Activated naive CD4-positive, alpha-beta T cell treated with anti-CD3 and anti-CD28 coated beads for 36 hours (primary cell): ENCODE measurements at regions of chr20 and their contacts with region 1.

Region 1: DNA sequence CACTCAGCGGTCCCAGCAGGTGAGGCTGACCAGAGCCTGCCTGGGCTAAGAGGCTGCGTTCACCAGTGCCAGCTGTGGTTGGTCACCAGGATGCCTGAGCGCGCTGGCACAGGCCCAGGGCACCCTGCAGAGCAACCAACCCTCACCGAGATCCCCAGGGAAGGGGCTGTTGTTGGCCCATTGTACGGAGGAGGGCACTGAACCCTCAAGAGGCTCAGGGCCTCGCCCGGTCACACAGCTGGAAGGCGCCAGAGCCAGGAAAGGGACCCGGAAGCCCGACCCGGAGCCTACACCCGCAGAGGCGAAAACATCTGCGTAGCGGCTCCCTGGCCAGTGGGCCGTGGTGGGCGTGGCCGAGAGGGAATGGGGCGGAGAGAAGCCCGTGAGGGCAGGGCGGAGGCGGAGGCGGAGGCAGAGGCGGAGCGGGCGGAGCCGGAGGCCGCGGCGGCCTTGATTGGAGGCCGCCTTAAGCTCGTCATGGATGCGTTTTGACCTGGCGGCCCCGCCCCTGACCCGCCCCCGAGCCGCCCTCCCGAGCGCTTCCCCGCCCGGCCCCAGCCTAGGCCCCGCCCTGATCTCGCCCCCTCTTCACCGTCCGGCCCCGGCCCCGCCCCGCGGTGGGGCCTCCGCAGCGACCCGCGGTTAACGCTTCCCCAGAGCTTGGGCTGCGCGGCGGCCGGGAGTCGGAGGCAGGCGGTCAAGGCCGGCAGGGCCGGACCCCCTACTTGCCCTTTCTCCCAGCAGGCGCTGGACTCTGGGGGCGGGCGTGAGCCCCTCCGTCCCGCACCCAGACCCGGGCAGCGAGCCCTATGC is 2.2 kb upstream of the MRGBP start:
- DNase-seq: peak; percentile 97
- H3K4me3 Mint-ChIP-seq: peak overlapping the region; percentile 81
- H3K27ac Mint-ChIP-seq: peak overlapping the region; percentile 84
- H3K4me1 Mint-ChIP-seq: peaks cover 25% of the 10 kb centered on the region
- H3K27me3 Mint-ChIP-seq: no peaks in the 10 kb centered on the region

Region 2: DNA sequence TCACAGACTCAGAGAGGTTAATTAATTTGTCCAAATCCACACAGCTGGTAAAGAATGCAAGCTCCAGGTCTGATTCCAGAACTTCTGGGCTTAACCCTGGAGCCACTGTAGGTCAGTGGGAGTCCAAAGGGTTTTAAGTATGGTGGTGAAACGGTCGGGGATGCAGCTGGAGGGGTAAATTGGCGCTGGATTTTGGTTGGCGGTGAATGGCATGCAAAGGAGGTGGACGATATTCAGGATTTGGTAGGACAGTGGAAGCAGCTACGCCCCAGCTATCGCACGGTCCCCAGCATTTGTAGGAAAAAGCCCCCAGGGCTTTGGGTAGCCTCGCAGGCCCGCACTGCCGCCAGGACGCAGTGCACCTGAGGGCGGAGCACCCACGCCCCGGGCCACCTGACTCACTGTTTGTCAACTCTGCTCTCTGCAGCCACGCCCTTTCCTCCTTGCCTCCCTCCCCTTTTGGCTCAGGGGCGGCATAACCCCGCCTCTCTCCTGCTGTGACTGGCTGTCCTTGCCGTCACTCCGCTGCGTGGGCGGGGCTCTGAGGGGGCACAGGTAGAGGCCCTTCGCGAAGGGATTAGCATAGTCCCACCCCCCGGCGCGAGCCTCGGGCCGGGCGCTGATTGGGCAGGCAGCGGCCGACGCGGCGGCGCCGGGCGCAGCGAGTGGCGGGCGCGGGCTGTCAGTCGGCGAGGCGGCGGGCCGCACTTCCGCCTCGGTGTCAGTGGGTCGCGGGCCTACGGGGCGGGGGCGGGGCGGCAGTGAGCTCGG is 556.1 kb before region 1 on chr20 and contains the start of gene OSBPL2:
- CTCF ChIA-PET with region 1: no interaction called
- intact Hi-C with region 1: loop called (anchors 1 kb)
- DNase-seq: peak; percentile 100
- H3K4me3 Mint-ChIP-seq: peak within 1 kb of the TSS; percentile 78
- H3K27ac Mint-ChIP-seq: peak within 1 kb of the TSS; percentile 79
- H3K4me1 Mint-ChIP-seq: peaks cover 28% of the 10 kb centered on the region
- H3K27me3 Mint-ChIP-seq: no peaks in the 10 kb centered on the region
- total RNA-seq, gene OSBPL2: 23.6 to 24.7 TPM

Region 3: DNA sequence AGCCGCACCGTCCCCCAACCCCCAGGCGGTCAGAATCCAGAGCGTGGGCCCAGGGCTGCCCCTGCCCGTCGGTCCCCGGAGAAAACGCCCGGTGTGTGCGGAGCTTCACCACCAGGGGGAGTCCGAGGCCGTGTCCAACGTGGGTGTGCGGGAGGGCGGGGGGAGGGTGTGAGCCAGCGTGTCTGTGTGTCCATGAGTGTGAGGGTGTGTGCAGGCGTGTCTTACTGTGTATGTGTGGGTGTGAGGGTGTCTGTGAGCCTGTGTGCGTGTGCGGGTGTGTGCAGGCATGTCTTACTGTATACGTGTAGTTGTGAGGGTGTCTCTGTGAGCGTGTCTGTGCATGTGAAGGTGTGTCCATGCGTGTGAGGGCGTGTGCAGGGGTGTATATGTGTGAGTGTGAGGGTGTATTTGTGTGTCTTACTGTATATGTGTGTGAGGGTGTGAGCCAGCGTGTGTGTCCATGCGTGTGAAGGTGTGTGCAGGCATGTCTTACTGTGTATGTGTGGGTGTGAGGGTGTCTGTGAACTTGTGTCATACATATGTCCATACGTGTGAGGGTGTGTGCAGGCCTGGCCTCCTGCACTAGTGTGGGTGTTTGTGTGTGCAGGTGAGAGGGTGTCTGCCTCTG is 293.8 kb before region 1 on chr20:
- CTCF ChIA-PET with region 1: interaction called, 14 read pairs
- intact Hi-C with region 1: loop called (anchors 1 kb)
- DNase-seq: peak; percentile 87
- H3K4me3 Mint-ChIP-seq: no peak overlapping the region
- H3K27ac Mint-ChIP-seq: peak overlapping the region; percentile 69
- H3K4me1 Mint-ChIP-seq: peaks cover 29% of the 10 kb centered on the region
- H3K27me3 Mint-ChIP-seq: peaks cover 7% of the 10 kb centered on the region

Region 4: GRCh38 chr20:62642040-62642665 is 152.0 kb before region 1 on chr20 and contains the start of gene SLCO4A1:
- CTCF ChIA-PET with region 1: interaction called, 4 read pairs
- intact Hi-C with region 1: loop called (anchors 1 kb)
- DNase-seq: peak; percentile 87
- H3K4me3 Mint-ChIP-seq: peak within 1 kb of the TSS; percentile 87
- H3K27ac Mint-ChIP-seq: no peak within 1 kb of the TSS
- H3K4me1 Mint-ChIP-seq: peaks cover 10% of the 10 kb centered on the region
- H3K27me3 Mint-ChIP-seq: peaks cover 1% of the 10 kb centered on the region
- total RNA-seq, gene SLCO4A1: 22.4 to 22.6 TPM

Region 5: GRCh38 chr20:62723351-62723750 is 70.8 kb before region 1 on chr20:
- CTCF ChIA-PET with region 1: no interaction called
- intact Hi-C with region 1: loop called (anchors 5 kb)
- DNase-seq: no peak
- H3K4me3 Mint-ChIP-seq: no peak overlapping the region
- H3K27ac Mint-ChIP-seq: no peak overlapping the region
- H3K4me1 Mint-ChIP-seq: peaks cover 19% of the 10 kb centered on the region
- H3K27me3 Mint-ChIP-seq: peaks cover 2% of the 10 kb centered on the region

Region 6: DNA sequence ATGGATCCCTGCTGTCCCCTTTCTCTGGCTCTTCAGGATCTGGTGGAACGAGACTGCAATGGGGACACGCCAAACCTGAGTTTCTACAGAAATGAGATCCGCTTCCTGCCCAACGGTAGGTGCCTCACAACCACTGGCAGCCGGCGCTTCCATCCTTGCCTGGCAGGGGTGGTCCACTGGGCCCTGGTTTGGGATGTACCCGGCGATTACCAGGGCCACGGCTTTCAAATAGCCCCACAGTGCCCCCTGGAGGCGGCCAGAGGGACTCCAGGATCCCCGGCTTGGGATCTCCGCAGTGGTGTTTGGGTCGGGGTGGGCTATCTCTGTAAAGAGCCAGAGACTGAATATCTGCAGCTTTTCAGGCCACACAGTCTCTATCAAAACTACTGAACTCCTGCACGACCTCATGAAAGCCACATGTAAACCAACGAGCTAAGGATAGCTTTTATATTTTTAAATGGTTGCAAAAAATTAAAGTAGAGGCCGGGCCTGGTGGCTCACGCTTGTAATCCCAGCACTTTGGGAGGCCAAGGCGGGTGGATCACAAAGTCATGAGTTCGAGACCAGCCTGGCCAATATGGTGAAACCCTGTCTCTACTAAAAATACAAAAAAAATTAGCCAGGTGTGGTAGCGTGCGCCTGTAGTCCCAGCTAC is 14.2 kb after region 1 on chr20:
- CTCF ChIA-PET with region 1: interaction called, 25 read pairs
- intact Hi-C with region 1: loop called (anchors 1 kb)
- DNase-seq: peak; percentile 82
- H3K4me3 Mint-ChIP-seq: no peak overlapping the region
- H3K27ac Mint-ChIP-seq: no peak overlapping the region
- H3K4me1 Mint-ChIP-seq: peaks cover 24% of the 10 kb centered on the region
- H3K27me3 Mint-ChIP-seq: no peaks in the 10 kb centered on the region

Region 7: GRCh38 chr20:62953839-62954703 is 160.0 kb after region 1 on chr20:
- CTCF ChIA-PET with region 1: no interaction called
- intact Hi-C with region 1: no loop called
- DNase-seq: peak; percentile 81
- H3K4me3 Mint-ChIP-seq: peak overlapping the region; percentile 69
- H3K27ac Mint-ChIP-seq: peak overlapping the region; percentile 46
- H3K4me1 Mint-ChIP-seq: peaks cover 34% of the 10 kb centered on the region
- H3K27me3 Mint-ChIP-seq: no peaks in the 10 kb centered on the region